ENCODE measurements at regions of chr12 and their contacts with region 1.

Region 1: DNA sequence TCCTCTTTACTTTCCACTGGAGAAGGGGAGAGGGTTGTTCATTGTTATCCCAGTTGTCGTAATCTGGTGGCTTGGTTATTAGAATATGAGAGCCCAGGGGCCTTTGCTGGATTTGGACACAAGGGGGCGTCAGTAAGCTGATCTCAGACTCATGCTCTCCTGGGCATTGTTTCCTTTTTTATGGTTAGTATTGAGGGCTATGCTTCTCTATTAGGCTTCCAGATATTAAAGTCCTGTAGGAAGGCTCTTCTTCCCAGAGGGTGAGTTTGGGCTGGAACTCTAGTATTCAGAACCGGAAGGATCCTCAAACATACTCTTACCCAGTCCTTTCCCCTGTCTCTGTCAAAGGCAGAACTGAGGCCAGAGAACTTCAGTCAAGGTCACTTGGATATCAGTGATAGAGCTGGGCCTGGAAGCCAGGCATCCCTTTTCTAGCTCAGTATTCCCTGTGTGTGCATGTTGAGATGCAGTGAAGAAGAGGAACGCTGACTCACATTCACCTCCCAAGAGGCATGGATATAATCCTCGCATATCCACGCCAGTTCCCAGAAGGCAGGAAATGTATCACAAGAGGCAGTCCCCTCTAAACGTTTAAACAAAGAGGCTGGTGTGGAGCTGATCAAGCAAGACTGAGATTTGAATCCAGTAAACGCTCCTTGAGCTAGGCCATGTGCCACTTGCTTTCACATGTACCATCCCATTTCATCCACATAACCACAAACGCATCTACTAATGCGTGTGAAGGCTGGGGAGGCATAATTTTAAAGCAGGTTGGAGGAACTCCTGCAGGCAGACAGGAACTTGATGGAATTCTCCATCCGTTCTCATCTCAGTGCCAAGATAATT is 41.6 kb downstream of the UBE3B start:
- DNase-seq: no peak

Region 2: DNA sequence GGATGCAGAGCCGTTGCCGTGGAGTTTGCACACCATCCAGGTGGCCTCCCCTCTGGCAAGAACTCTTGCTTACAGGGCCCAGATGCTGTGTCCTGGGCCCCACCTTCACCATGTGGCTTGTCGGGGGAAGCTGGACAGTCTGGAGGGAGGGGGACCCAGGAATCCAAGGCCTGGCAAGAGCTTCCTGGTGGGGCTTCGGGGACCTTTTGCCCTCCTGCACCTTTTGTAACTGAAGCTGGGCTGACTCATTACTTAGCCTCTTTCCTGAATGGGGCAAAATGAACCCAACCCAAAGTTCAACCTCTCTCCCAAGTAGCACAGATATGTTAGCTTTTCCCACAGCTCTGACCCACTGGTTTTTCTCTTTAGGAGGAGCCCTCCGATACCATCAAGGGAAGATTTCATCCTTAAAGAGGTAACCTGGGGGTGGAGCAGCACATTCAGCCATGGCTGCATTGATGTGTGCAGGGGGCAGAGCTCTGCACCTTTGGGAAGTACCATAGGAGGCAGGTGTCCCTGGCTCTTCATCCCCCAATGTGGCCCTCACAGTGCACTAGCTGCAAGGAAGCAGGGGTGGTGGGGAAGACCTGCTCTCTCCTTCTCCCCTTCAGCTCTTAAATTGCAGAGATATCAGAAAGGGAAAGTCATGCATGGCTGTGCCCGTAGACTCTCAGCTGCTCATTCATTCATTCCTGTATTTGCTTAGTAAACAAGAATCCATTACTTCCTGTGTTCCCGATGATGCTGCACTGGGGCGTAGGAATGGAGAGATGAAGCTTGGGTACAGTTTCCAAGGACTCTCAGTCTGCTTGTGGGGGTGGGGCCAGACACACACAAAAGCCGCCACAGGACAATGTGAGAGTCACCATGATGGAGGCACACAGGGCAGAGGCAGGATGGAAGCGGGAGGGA is 67.6 kb after region 1 on chr12:
- intact Hi-C with region 1: no loop called
- DNase-seq: no peak

Region 3: GRCh38 chr12:109597795-109598427 is 78.9 kb after region 1 on chr12:
- intact Hi-C with region 1: loop called (anchors 5 kb)
- DNase-seq: peak; percentile 94

Region 4: DNA sequence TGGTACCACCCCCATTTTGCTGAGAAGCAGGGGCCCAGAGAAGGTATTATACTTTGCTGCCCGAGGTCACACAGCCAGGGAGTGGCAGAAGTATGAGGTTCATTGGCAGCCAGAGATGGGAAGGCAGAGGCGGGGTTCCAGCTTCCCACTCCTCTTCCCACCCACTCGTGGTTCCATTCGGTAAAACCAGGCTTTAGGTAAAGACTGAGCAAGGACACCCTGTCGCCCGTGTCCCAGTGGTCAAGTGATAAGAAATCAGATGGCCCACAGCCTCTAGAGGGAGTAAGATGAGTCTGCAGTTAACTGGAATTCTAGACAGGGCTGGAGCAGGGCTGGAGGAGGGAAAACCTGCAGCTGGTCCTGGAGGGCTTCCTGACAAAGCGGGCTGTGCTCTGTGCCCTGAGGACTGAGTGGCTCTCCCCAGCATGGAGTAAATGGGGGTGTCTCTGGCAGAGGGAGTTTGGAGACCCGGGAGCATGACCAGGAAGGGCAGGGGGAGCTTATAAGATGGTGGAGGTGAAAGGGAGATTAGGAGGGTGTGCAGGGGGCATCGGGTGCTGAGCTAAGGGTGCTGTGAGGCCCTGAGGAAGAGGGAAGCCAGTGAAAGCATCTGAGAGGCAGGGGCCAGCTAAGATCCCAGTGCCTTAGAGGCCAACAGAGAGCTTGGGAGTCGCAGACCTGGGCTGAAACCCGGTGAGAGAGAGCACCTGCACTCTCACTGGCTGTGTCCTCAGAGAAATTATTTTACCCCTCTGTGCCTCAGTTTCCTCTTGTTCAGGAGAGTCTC is 200.4 kb after region 1 on chr12:
- intact Hi-C with region 1: loop called (anchors 5 kb)
- DNase-seq: no peak

Region 5: DNA sequence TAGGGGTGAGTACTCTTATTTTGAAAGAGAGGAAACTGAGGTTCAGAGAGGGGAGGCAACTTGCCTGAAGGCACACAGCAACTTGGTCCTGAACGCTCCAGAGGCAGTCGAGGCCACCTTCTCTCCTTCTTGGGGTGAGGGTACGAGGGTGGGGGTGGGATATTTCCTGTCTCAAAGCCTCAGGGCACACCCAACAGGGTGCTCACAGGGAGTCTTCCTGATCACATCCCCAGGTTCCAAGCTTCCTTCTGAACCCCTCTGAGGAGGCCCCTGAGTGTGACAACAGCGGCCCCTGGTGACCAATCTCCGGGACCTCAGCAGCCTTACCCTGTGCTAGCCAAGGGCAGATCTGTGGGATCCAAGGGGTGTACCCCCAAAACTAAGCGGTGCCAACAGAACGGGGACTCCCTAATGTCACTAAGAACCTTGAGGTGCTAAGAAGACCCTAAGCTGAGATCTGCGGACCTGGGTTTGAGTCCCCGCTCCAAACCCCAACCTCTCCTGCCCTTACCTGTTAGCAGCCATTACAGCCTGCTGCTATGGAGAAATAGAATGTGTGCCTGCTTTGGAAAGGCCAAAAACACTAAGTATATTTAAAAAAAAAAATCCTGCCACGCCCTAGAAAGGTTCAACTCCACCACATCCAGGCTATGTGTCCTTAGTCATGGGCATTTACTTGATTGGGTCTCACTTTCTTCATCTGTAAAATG is 256.3 kb after region 1 on chr12:
- intact Hi-C with region 1: loop called (anchors 2 kb)
- DNase-seq: peak; percentile 87

Region 6: GRCh38 chr12:109880016-109880931 is 361.2 kb after region 1 on chr12 and contains the start of gene GLTP:
- intact Hi-C with region 1: loop called (anchors 5 kb)
- DNase-seq: peak; percentile 95
- total RNA-seq, gene GLTP: 23.3 TPM